ENCODE measurements at regions of chr3 and their contacts with region 1.

Region 1: DNA sequence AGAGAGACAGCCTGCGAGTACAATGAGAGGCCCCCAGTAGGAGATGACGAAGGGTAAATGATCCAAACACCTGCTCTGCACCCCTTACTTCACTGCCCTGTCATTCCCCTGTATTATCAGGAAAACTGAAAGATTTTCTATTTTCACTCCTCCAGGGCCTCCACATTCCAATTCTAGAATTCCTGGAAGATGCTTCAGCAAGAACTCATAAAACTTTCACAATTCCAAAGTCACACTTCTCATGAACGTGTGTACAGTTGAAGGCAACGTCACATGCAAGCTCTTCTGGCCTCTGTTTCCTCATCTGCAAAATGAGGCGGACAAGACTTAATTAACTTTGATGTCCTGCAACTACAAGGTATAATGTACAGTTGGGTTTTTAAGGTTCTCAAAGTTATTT is 62.8 kb upstream of the SPATA12 start:
- DNase-seq: no peak
- H3K4me3 ChIP-seq: no peak overlapping the region
- H3K27ac ChIP-seq: no peak overlapping the region
- H3K4me1 ChIP-seq: no peaks in the 10 kb centered on the region
- H3K27me3 ChIP-seq: no peaks in the 10 kb centered on the region
- CTCF ChIP-seq: no peak
- EP300 ChIP-seq: no peak
- RAD21 ChIP-seq: no peak

Region 2: GRCh38 chr3:56702490-56703315 is 295.0 kb before region 1 on chr3:
- CTCF ChIA-PET with region 1: interaction called, 16 read pairs
- POLR2A ChIA-PET with region 1: no interaction called
- DNase-seq: peak; percentile 57
- H3K4me3 ChIP-seq: peak overlapping the region in 1 of 2 experiments; percentile 21; a peak in 1 of 4 replicates
- H3K27ac ChIP-seq: no peak overlapping the region
- H3K4me1 ChIP-seq: no peaks in the 10 kb centered on the region
- H3K27me3 ChIP-seq: no peaks in the 10 kb centered on the region
- CTCF ChIP-seq: peak; percentile 95
- EP300 ChIP-seq: no peak
- RAD21 ChIP-seq: peak; percentile 96

Region 3: GRCh38 chr3:57007513-57008460 is 10.1 kb after region 1 on chr3:
- CTCF ChIA-PET with region 1: interaction called, 57 read pairs
- POLR2A ChIA-PET with region 1: no interaction called
- DNase-seq: no peak
- H3K4me3 ChIP-seq: peak overlapping the region in 1 of 2 experiments; percentile 38; a peak in 2 of 4 replicates
- H3K27ac ChIP-seq: peak overlapping the region; percentile 84 to 85
- H3K4me1 ChIP-seq: peaks cover 19 to 42% of the 10 kb centered on the region in 2 experiments
- H3K27me3 ChIP-seq: no peaks in the 10 kb centered on the region
- CTCF ChIP-seq: no peak
- EP300 ChIP-seq: peak in 1 of 2 experiments; percentile 32; a peak in 1 of 4 replicates
- RAD21 ChIP-seq: no peak; the same call in 1 of the 2 replicates

Region 4: DNA sequence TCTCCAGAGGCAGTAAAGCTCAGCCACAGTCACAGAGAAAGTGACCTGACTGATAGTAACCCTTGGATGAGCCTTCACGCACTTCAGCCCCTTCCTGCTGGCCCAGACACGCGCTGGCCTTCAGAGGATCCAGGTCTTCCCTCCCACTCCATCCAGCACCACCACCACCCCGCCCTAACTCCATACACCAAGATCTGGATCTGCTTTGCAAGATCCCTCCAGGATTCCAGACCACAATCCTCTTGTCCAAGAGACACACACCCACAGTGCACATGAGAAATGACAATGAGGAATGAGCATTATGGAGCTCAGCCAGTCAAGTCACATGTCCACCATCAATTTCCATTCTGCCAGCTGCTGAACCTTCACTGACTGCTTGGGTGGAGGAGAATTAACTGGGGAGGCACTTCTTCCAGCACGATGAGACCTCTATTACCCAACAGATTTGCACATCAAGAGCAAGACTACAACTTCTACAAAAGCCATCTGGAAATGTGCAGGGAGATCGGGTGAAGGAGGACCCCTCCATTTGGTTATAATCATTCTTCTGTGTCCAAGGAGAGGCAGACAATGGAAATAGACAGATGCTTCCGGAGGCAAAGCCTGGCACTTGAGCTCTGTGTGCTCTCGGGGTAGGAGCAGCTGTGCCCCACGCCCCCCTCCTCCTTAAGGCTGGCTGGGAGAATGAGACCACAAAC is 50.4 kb after region 1 on chr3:
- CTCF ChIA-PET with region 1: no interaction called
- POLR2A ChIA-PET with region 1: no interaction called
- DNase-seq: no peak
- H3K4me3 ChIP-seq: no peak overlapping the region
- H3K27ac ChIP-seq: no peak overlapping the region
- H3K4me1 ChIP-seq: peaks cover 0 to 2% of the 10 kb centered on the region in 2 experiments; a peak in 1 of 4 replicates
- H3K27me3 ChIP-seq: no peaks in the 10 kb centered on the region
- CTCF ChIP-seq: no peak
- EP300 ChIP-seq: no peak
- RAD21 ChIP-seq: no peak

Region 5: DNA sequence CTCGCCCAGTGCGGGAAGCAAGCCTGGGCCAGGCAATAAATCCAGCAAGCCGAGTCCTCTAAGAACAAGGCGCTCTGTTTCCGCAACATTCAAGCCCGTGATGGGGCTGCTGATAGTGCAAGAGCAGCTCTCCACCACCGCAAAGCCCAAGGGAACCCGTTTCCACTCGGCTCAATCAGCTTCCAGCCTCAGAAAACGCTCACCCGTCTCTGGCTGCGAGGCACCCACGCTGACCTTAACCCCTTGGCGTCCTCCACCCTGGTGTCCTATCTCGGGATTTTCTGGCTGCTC is 80.6 kb after region 1 on chr3:
- CTCF ChIA-PET with region 1: interaction called, 20 read pairs
- POLR2A ChIA-PET with region 1: no interaction called
- DNase-seq: peak; percentile 76
- H3K4me3 ChIP-seq: peak overlapping the region; percentile 76 to 79
- H3K27ac ChIP-seq: no peak overlapping the region
- H3K4me1 ChIP-seq: peaks cover 0 to 9% of the 10 kb centered on the region in 2 experiments; a peak in 1 of 4 replicates
- H3K27me3 ChIP-seq: no peaks in the 10 kb centered on the region
- CTCF ChIP-seq: no peak
- EP300 ChIP-seq: no peak
- RAD21 ChIP-seq: peak; percentile 6; the same call in 1 of the 2 replicates

Region 6: GRCh38 chr3:57086201-57086600 is 88.5 kb after region 1 on chr3:
- CTCF ChIA-PET with region 1: interaction called, 24 read pairs
- POLR2A ChIA-PET with region 1: no interaction called
- DNase-seq: no peak
- H3K4me3 ChIP-seq: no peak overlapping the region
- H3K27ac ChIP-seq: no peak overlapping the region
- H3K4me1 ChIP-seq: no peaks in the 10 kb centered on the region
- H3K27me3 ChIP-seq: no peaks in the 10 kb centered on the region
- CTCF ChIP-seq: no peak
- EP300 ChIP-seq: no peak
- RAD21 ChIP-seq: no peak

Region 7: DNA sequence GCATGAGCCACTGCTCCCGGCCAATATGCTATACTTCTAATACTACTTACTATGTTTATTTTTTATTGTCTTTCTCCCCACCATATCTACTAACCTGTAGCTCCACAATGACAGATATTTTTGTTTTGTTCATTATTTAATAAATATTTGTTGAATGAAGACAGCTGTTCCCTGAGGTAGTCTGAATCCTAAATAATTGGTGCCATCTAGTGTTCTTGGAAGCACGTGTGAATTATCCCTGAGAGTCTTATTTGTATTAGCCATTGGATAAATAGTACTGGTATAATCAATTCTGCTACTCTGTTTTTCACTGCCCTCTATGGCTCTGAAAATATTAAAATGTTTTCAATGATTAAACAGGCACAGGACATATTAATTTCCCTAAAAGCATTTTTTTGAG is 224.2 kb after region 1 on chr3:
- CTCF ChIA-PET with region 1: interaction called, 24 read pairs
- POLR2A ChIA-PET with region 1: no interaction called
- DNase-seq: peak; percentile 36
- H3K4me3 ChIP-seq: no peak overlapping the region
- H3K27ac ChIP-seq: no peak overlapping the region
- H3K4me1 ChIP-seq: peaks cover 0 to 3% of the 10 kb centered on the region in 2 experiments; a peak in 2 of 4 replicates
- H3K27me3 ChIP-seq: no peaks in the 10 kb centered on the region
- CTCF ChIP-seq: peak; percentile 53
- EP300 ChIP-seq: no peak
- RAD21 ChIP-seq: peak; percentile 80

Region 8: GRCh38 chr3:57423335-57423734 is 425.7 kb after region 1 on chr3:
- CTCF ChIA-PET with region 1: no interaction called
- POLR2A ChIA-PET with region 1: no interaction called
- DNase-seq: no peak
- H3K4me3 ChIP-seq: no peak overlapping the region
- H3K27ac ChIP-seq: no peak overlapping the region
- H3K4me1 ChIP-seq: no peaks in the 10 kb centered on the region
- H3K27me3 ChIP-seq: no peaks in the 10 kb centered on the region
- CTCF ChIP-seq: no peak
- EP300 ChIP-seq: no peak
- RAD21 ChIP-seq: no peak